Activated T-helper 1 cell treated with anti-CD3 and anti-CD28 coated beads, Interleukin-12 subunit alpha, Interleukin-12 subunit beta, Interleukin-2, Interleukin-4 antibody, amounts not matched to agents 30 ng/mL and 10 ng/mL and 1 ng/mL, durations not matched to agents 14 hours and 24 hours and 36 hours (primary cell): ENCODE measurements at regions of chr19 and their contacts with region 1.

Region 1: DNA sequence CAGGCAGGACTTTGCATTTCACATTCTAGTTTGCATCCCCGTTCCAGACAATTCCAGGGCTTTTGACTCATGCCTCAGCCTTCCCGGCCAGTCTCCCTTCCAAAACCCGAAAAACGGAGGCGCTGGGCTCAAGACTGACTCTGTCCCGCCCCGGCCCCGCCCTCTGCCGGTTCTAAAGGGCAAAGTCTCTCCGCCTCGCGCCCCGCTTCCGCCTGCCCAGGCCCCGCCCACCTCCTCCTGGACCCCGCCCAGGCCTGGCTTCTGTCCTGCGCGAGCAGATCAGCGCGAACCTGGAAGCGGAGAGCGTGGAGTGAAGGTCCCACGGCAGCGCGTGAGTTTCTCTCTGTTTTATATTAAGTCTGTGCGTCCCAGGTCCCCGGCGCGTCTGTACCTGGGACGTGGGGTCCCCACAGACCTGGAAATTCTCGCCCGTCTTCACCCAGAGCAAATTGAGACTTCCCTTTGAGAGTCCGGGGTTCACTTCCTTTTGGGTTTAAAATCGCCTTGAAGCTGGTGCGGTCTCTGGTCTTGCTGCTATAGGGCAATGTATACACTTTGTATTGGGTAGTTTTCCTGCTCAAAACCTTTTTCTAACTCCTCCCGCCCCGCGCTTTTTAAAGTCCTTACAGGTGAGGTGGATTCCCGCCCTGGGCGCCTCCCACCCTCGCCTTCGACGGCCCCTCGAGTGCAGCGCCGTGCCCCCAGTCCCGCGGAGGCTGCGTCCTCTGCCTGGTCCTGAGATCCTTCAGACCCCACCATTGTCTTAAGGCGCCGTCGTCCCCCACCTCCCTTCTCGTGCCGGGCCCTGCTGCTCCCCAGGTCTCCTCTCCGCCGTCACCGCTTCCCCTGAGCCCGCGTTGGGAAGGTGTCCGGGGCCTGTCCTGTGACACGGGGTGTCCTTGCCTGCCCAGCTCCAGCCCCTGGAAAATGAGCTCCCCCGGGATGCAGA is 31.2 kb downstream of the ZNF701 start:
- DNase-seq: peak; percentile 89
- H3K4me3 Mint-ChIP-seq: peak overlapping the region; percentile 89
- H3K27ac Mint-ChIP-seq: peak overlapping the region; percentile 64
- H3K4me1 Mint-ChIP-seq: peaks cover 12% of the 10 kb centered on the region
- H3K27me3 Mint-ChIP-seq: no peaks in the 10 kb centered on the region

Region 2: GRCh38 chr19:52139252-52140031 is 461.9 kb before region 1 on chr19 and contains the start of gene ZNF616:
- intact Hi-C with region 1: loop called (anchors 1 kb)
- DNase-seq: peak; percentile 94
- H3K4me3 Mint-ChIP-seq: peak within 1 kb of the TSS; percentile 98
- H3K27ac Mint-ChIP-seq: peak within 1 kb of the TSS; percentile 94
- H3K4me1 Mint-ChIP-seq: peaks cover 23% of the 10 kb centered on the region
- H3K27me3 Mint-ChIP-seq: no peaks in the 10 kb centered on the region
- total RNA-seq, gene ZNF616: 4.1 and 6.7 TPM in 2 replicates

Region 3: DNA sequence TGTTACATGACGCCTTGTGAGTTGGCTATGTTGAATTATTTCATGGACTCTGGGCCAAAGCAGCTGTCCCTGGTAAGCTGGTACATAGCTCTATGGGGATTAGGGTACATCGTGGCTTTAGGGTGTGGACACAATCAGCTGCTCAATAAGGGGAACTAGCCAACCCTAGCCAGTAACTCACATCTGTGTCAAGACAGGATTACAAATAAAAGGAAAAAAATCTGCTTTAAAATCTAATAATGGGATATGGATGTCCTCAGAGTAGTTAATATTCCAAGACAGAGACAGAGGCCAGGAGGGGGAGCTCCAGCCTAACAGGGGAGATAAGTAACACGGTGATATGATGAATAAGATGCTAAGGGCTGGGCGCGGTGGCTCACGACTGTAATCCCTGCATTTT is 353.1 kb before region 1 on chr19:
- intact Hi-C with region 1: loop called (anchors 1 kb)
- DNase-seq: peak; percentile 12
- H3K4me3 Mint-ChIP-seq: no peak overlapping the region
- H3K27ac Mint-ChIP-seq: no peak overlapping the region
- H3K4me1 Mint-ChIP-seq: no peaks in the 10 kb centered on the region
- H3K27me3 Mint-ChIP-seq: no peaks in the 10 kb centered on the region

Region 4: DNA sequence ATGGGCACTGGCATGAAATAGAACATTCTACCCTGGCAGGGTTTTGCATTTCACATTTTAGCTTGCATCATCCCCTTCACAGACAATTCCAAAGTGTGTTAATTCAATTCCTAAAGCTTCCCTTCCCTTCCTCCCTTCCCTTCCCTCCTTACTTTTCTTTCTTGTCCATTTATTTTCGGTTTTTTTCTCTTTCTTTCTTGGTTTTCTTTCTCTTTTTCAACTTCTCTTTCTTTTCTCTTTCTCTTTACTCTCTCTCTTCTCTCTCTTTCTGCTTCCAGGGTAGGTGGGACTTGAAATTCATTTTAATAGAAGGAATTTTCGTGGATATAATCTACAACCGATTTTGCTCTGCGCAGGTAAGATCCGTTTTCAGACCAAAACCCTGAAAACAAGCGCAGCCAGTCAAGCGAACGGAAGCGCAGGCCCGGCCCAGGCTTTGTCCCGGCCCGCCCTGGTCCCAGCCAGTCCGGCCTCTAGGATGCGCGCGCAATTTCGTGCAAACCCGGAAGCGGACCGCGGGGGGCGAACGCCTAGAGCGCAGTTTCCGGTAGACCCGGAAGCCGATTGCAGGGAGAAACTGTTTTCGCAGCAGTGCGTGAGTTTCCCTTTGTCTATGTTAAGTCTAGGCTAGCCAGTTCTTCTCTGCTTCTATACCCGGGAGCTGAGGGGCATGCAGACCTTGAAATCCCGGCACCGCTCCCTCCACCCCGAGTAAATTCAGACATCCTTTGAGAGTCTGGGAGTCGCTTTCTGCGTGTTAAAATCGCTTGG is 203.8 kb before region 1 on chr19 and contains the start of gene ZNF528:
- intact Hi-C with region 1: loop called (anchors 1 kb)
- DNase-seq: peak; percentile 85
- H3K4me3 Mint-ChIP-seq: peak within 1 kb of the TSS; percentile 86
- H3K27ac Mint-ChIP-seq: peak within 1 kb of the TSS; percentile 77
- H3K4me1 Mint-ChIP-seq: peaks cover 17% of the 10 kb centered on the region
- H3K27me3 Mint-ChIP-seq: peaks cover 1% of the 10 kb centered on the region
- total RNA-seq, gene ZNF528: 6.8 and 8.0 TPM in 2 replicates

Region 5: DNA sequence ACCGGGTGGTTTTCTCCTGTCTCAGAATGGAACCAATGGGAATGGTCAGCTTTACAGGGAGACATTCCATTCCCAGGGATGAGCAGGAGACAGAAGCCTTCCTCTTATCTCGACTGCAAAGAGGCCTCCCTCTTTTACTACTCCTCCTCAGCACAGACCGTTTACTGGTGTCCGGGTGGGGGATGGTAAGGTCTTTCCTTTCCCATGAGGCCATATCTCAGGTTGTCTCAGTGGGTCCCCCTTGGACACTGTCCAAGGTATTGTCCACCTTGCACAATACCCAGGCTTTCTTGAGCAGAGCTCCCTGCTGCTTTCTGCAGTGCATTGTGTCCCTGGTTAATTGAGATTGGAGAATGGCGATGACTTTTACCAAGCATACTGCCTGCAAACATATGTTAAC is 81.3 kb before region 1 on chr19:
- intact Hi-C with region 1: no loop called
- DNase-seq: no peak
- H3K4me3 Mint-ChIP-seq: no peak overlapping the region
- H3K27ac Mint-ChIP-seq: no peak overlapping the region
- H3K4me1 Mint-ChIP-seq: no peaks in the 10 kb centered on the region
- H3K27me3 Mint-ChIP-seq: no peaks in the 10 kb centered on the region

Region 6: DNA sequence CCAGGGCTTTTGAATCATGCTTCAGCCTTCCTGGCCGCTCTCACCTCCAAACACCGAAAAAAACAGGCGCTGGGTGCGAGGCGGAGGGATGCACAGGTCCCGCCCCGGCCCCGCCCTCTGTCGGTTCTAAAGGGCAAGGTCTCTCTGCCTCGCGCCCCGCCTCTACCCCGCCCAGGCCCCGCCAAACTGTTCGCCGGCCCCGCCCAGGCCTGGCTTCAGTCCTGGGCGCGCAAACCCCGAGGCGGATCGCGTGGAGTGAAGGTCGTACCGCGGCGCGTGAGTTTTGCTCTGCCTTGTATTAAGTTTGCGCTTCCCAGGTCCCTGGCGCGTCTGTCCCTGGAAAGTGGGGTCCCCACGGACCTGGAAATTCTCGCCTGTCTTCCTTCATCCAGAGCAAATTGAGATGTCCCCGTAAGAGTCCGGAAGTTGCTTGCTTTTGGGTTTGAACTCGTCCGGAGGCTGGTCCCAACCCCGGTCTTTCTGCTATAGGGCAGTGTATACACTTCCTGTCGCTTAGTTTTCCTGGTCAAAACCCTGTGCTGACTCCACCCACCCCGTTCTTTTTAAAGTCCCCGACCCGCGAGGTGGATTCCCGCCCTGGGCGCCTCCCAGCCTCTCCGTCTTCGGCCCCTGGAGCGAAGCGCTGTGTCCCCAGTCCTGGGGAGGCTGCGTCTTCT is 65.4 kb before region 1 on chr19:
- intact Hi-C with region 1: loop called (anchors 1 kb)
- DNase-seq: peak; percentile 80
- H3K4me3 Mint-ChIP-seq: peak overlapping the region; percentile 84
- H3K27ac Mint-ChIP-seq: peak overlapping the region; percentile 88
- H3K4me1 Mint-ChIP-seq: peaks cover 11% of the 10 kb centered on the region
- H3K27me3 Mint-ChIP-seq: no peaks in the 10 kb centered on the region

Region 7: GRCh38 chr19:52570000-52570861 is 31.1 kb before region 1 on chr19 and contains the start of gene ZNF701:
- intact Hi-C with region 1: loop called (anchors 1 kb)
- DNase-seq: peak; percentile 94
- H3K4me3 Mint-ChIP-seq: peak within 1 kb of the TSS; percentile 94
- H3K27ac Mint-ChIP-seq: peak within 1 kb of the TSS; percentile 94
- H3K4me1 Mint-ChIP-seq: peaks cover 20% of the 10 kb centered on the region
- H3K27me3 Mint-ChIP-seq: no peaks in the 10 kb centered on the region
- total RNA-seq, gene ZNF701: 16.0 and 18.3 TPM in 2 replicates

Region 8: GRCh38 chr19:52761696-52762095 is 160.4 kb after region 1 on chr19:
- intact Hi-C with region 1: no loop called
- DNase-seq: no peak
- H3K4me3 Mint-ChIP-seq: no peak overlapping the region
- H3K27ac Mint-ChIP-seq: no peak overlapping the region
- H3K4me1 Mint-ChIP-seq: no peaks in the 10 kb centered on the region
- H3K27me3 Mint-ChIP-seq: no peaks in the 10 kb centered on the region

Region 9: GRCh38 chr19:52786457-52787359 is 185.4 kb after region 1 on chr19 and contains the start of gene ZNF600:
- intact Hi-C with region 1: loop called (anchors 1 kb)
- DNase-seq: peak; percentile 52
- H3K4me3 Mint-ChIP-seq: peak within 1 kb of the TSS; percentile 90
- H3K27ac Mint-ChIP-seq: peak within 1 kb of the TSS; percentile 75
- H3K4me1 Mint-ChIP-seq: peaks cover 26% of the 10 kb centered on the region
- H3K27me3 Mint-ChIP-seq: no peaks in the 10 kb centered on the region
- total RNA-seq, gene ZNF600: 11.9 and 13.4 TPM in 2 replicates